ENCODE measurements at regions of chr13 and their contacts with region 1.

Region 1: DNA sequence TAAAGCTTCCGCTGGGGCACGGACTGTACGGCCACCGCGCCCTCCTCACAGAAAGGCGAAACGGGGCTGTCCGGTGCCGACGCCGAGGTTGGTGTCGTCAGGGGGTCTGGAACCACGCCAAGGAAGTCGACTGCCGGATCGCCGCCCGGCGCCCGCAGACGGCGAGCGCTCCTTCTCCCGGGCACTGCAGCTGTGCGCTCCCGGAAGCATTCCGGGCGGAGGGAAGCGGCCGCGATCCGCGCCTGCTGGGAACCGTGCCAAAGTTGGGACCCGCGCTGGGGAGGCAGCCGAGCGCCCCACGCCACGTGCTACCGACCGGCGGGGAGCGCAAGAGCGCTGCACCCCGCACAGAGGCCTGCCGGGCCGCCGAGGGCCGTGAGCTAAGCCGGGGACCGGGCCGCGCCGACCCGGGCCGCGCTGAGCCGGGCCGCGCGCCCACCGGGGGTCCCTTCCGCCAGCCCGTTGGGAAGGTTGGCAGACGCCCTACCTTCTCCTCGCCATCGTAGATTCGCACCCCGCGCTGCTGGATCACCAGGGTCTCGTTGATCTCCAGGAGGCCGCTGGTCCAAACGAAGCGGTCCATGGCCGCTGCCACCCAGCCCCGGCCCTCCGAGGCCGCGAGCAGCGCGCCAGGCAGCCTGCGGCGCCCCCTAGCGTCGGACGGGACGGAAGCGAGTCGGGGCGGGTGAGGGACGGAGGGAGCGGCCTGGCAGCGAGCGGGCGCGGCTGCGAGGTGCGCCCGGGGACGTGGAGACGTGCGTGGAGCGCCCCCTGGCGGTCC is at the start of gene VPS36:
- DNase-seq: peak; percentile 97
- ATAC-seq: peak; percentile 67
- H3K4me3 Mint-ChIP-seq: peak within 1 kb of the TSS; percentile 97
- H3K27ac Mint-ChIP-seq: peak within 1 kb of the TSS; percentile 93
- H3K4me1 Mint-ChIP-seq: peaks cover 39% of the 10 kb centered on the region
- H3K27me3 Mint-ChIP-seq: no peaks in the 10 kb centered on the region
- CTCF ChIP-seq: peak; percentile 95
- total RNA-seq, gene VPS36: 51.8 and 60.6 TPM in 2 replicates

Region 2: DNA sequence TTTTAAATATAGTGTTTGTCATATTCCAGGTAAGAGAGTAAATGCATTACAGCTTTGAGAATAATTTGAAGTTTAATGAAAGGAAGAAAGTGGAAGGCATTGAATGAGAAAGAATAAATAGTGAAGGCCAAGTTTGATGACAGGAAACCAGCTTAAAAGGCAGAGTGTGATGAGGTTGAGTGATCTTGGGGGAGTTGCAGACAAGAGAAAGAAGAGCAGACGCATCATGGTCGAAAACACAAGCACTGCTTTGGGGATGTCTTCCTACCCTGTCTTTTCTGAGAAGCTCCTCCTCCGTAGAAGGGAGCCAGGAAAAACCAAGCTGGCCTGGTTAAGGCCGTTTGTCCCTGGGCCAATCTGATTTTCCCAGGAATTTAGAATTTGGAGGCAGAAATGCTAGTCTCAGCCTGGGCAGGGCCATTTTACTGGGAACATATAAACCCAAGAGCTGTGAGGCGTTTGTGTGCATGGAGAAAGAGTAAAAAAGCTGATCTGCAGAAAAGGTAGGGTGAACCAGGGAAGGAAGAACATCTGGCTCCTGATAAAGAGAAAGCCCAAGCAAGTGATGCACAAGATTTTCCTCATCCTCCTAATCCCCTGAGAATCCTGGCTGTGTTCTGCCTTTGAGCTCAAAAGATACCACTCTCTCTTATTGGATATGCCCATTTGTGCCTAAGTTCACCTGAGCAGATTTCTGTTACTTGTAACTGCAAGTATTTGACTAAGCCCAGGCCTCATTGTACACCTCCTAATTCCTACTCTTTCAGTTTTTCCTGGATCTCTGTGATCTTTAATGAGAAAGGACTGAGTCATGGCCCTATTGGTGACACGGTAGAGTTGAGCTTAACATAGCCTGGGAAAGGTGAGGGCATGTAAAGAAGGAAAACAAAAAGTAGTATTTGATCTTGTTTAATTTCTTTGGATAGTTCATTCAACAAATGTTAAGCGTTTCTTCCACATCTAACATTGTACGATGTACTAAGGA is 785.9 kb before region 1 on chr13:
- CTCF ChIA-PET with region 1: no interaction called
- POLR2A ChIA-PET with region 1: no interaction called
- intact Hi-C with region 1: no loop called
- DNase-seq: no peak
- ATAC-seq: no peak
- H3K4me3 Mint-ChIP-seq: no peak overlapping the region
- H3K27ac Mint-ChIP-seq: no peak overlapping the region
- H3K4me1 Mint-ChIP-seq: peaks cover 35% of the 10 kb centered on the region
- H3K27me3 Mint-ChIP-seq: no peaks in the 10 kb centered on the region
- CTCF ChIP-seq: no peak

Region 3: DNA sequence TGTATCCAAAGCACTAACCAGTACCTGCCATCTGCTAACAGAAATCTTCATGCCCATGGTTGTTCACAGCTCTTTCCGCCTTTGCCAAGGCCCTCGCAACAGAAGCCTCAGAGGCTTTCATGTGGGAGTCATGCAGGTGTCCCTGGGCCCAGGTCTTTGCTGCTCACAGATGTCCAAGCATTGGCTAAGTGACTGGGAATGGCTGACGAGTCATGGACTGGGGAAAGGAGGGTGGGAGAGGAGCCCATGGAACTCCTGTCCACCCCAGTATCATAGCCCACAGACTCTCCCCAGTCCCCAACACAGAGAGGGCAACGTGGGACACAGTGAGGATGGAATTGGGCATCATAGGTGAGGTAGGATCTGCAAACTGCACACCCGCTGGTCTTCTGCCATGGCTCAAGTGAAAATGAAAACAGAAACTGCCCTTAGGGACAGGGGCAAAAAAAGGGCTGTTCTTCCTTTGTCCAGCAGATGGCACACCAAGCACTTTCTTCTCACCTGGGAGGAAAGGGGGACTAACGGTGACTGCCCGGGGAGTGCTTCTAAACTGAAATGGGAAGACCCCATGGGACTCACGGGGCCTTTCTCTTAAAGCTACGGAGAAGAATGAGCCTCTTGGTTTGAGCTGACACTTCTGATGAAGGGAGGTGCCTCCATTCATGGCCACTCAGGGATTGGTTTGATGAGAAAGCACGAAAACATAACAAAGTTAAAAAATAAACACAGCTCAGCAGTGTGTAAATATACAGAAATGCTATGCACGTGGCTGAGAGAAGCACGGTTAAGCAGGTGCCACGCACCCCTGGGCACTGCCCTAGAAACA is 635.2 kb before region 1 on chr13:
- CTCF ChIA-PET with region 1: interaction called, 3 read pairs
- POLR2A ChIA-PET with region 1: no interaction called
- intact Hi-C with region 1: loop called (anchors 5 kb)
- DNase-seq: peak; percentile 56
- ATAC-seq: peak; percentile 84
- H3K4me3 Mint-ChIP-seq: peak overlapping the region; percentile 57
- H3K27ac Mint-ChIP-seq: peak overlapping the region; percentile 56
- H3K4me1 Mint-ChIP-seq: peaks cover 44% of the 10 kb centered on the region
- H3K27me3 Mint-ChIP-seq: no peaks in the 10 kb centered on the region
- CTCF ChIP-seq: peak; percentile 46

Region 4: DNA sequence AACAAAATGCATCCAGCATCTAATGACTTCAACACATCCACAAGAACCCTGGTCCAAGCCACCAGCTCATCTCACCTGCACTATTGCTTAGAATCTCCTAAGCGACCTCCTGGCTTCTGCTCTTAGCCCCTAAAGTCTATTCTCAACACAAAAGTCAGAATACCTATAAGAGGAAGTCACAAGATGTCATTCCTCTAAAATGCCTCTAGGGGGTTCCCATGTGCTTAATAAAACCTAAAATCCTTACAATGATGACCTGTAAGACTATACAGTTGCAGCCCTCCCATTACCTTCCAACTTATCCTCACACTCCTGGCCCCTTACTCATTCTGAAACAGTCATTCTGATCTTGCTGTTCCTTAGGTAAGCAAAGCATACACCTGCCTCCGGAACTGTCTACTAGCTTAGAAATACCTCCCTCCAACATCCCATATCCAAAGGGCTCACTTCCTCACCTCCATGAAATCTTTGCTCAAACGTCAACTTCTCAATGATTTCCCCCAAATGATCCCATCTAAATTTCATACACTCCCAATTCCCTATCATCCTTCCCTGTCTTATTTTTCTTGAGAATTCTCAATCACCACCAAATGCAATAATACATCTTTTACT is 449.0 kb before region 1 on chr13:
- CTCF ChIA-PET with region 1: interaction called, 3 read pairs
- POLR2A ChIA-PET with region 1: no interaction called
- intact Hi-C with region 1: loop called (anchors 1 kb)
- DNase-seq: no peak
- ATAC-seq: peak; percentile 85
- H3K4me3 Mint-ChIP-seq: no peak overlapping the region
- H3K27ac Mint-ChIP-seq: no peak overlapping the region
- H3K4me1 Mint-ChIP-seq: no peaks in the 10 kb centered on the region
- H3K27me3 Mint-ChIP-seq: peaks cover 6% of the 10 kb centered on the region
- CTCF ChIP-seq: no peak

Region 5: GRCh38 chr13:52128714-52129700 is 321.2 kb before region 1 on chr13 and contains the start of gene NEK5:
- CTCF ChIA-PET with region 1: no interaction called
- POLR2A ChIA-PET with region 1: no interaction called
- intact Hi-C with region 1: loop called (anchors 2 kb)
- DNase-seq: peak; percentile 56
- ATAC-seq: peak; percentile 68
- H3K4me3 Mint-ChIP-seq: peak within 1 kb of the TSS; percentile 87
- H3K27ac Mint-ChIP-seq: no peak within 1 kb of the TSS
- H3K4me1 Mint-ChIP-seq: peaks cover 17% of the 10 kb centered on the region
- H3K27me3 Mint-ChIP-seq: peaks cover 14% of the 10 kb centered on the region
- CTCF ChIP-seq: no peak
- total RNA-seq, gene NEK5: not detected in 2 replicates

Region 6: DNA sequence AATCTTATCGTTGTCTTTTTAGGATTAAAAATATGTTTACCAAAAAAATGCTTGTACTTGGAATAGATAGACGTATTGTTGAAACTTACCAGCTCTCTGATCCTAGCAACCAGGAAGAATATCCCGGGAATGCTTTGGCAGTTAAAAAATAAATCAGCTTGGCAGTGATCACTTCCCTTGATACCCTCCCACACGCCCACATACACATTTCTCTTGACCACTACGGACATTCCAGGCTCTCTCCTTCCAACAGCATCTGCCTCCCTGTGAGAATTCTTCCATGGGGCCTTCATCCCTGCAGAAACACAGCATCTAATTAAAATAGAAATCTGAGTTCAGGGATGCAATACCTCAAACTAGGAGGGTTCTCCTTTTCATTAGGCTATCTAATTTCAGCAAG is 102.1 kb before region 1 on chr13:
- CTCF ChIA-PET with region 1: interaction called, 19 read pairs
- POLR2A ChIA-PET with region 1: interaction called, 3 read pairs
- intact Hi-C with region 1: loop called (anchors 1 kb)
- DNase-seq: no peak
- ATAC-seq: no peak
- H3K4me3 Mint-ChIP-seq: no peak overlapping the region
- H3K27ac Mint-ChIP-seq: no peak overlapping the region
- H3K4me1 Mint-ChIP-seq: no peaks in the 10 kb centered on the region
- H3K27me3 Mint-ChIP-seq: peaks cover 4% of the 10 kb centered on the region
- CTCF ChIP-seq: no peak

Region 7: DNA sequence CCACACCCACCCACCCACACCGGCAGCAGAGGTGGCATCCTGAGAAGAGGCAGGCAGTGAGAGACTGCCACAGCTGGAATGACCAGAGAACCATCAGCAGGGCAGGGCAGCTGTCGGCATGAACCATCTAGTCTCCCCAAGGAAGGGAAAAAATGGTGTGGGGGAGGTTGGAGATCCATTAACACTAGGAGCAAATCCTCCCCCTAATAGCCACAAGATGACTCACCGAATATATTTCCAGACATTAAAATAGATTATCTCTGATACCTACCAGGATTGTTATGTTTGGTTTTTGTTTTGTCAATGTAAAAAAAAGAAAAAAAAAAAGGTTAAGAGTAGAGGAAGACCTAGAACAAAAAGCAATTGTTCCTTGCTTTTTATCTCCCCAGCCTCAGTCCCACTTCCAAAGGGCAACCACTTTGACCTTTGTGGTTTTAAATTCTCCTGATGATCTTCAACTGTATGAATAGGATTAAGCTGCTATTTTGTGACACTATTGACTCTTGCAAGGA is 78.4 kb before region 1 on chr13:
- CTCF ChIA-PET with region 1: no interaction called
- POLR2A ChIA-PET with region 1: no interaction called
- intact Hi-C with region 1: no loop called
- DNase-seq: no peak
- ATAC-seq: no peak
- H3K4me3 Mint-ChIP-seq: no peak overlapping the region
- H3K27ac Mint-ChIP-seq: no peak overlapping the region
- H3K4me1 Mint-ChIP-seq: no peaks in the 10 kb centered on the region
- H3K27me3 Mint-ChIP-seq: no peaks in the 10 kb centered on the region
- CTCF ChIP-seq: no peak

Region 8: GRCh38 chr13:52617070-52618060 is 167.2 kb after region 1 on chr13:
- CTCF ChIA-PET with region 1: interaction called, 7 read pairs
- POLR2A ChIA-PET with region 1: interaction called, 7 read pairs
- intact Hi-C with region 1: loop called (anchors 1 kb)
- DNase-seq: peak; percentile 78
- ATAC-seq: peak; percentile 98
- H3K4me3 Mint-ChIP-seq: peak overlapping the region; percentile 100
- H3K27ac Mint-ChIP-seq: peak overlapping the region; percentile 96
- H3K4me1 Mint-ChIP-seq: peaks cover 34% of the 10 kb centered on the region
- H3K27me3 Mint-ChIP-seq: peaks cover under 1% of the 10 kb centered on the region
- CTCF ChIP-seq: no peak

Region 9: GRCh38 chr13:52921194-52921593 is 471.0 kb after region 1 on chr13:
- CTCF ChIA-PET with region 1: no interaction called
- POLR2A ChIA-PET with region 1: no interaction called
- intact Hi-C with region 1: loop called (anchors 1 kb)
- DNase-seq: no peak
- ATAC-seq: peak; percentile 92
- H3K4me3 Mint-ChIP-seq: no peak overlapping the region
- H3K27ac Mint-ChIP-seq: peak overlapping the region; percentile 75
- H3K4me1 Mint-ChIP-seq: peaks cover 15% of the 10 kb centered on the region
- H3K27me3 Mint-ChIP-seq: peaks cover 5% of the 10 kb centered on the region
- CTCF ChIP-seq: no peak

Region 10: GRCh38 chr13:53683608-53684007 is 1233.4 kb after region 1 on chr13:
- CTCF ChIA-PET with region 1: no interaction called
- POLR2A ChIA-PET with region 1: no interaction called
- intact Hi-C with region 1: no loop called
- DNase-seq: no peak
- ATAC-seq: no peak
- H3K4me3 Mint-ChIP-seq: no peak overlapping the region
- H3K27ac Mint-ChIP-seq: no peak overlapping the region
- H3K4me1 Mint-ChIP-seq: no peaks in the 10 kb centered on the region
- H3K27me3 Mint-ChIP-seq: no peaks in the 10 kb centered on the region
- CTCF ChIP-seq: no peak